Activated naive CD4-positive, alpha-beta T cell treated with anti-CD3 and anti-CD28 coated beads for 36 hours (primary cell): ENCODE measurements at regions of chr3 and their contacts with region 1.

Region 1: DNA sequence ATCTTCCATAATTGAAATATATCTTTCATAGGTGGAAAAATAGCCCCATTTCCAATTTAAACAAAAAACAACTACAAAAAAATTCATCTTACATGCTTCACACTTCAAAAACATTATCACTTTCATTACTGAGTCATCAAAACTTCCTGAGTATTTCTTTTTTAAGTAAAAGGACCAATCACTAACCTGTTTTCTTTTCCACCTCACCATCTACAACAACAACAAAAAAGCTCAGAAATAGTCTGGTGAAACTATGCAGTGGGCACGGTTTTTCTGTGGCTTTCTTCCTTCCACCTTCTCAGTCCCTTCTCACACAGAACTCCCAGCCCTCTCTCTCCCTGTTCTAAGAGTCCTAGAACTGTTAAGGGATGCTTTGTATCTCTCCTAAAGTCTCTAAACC is 20.3 kb upstream of the TNIK start:
- DNase-seq: peak; percentile 22
- H3K4me3 Mint-ChIP-seq: no peak overlapping the region
- H3K27ac Mint-ChIP-seq: peak overlapping the region; percentile 80
- H3K4me1 Mint-ChIP-seq: peaks cover 16% of the 10 kb centered on the region
- H3K27me3 Mint-ChIP-seq: no peaks in the 10 kb centered on the region

Region 2: DNA sequence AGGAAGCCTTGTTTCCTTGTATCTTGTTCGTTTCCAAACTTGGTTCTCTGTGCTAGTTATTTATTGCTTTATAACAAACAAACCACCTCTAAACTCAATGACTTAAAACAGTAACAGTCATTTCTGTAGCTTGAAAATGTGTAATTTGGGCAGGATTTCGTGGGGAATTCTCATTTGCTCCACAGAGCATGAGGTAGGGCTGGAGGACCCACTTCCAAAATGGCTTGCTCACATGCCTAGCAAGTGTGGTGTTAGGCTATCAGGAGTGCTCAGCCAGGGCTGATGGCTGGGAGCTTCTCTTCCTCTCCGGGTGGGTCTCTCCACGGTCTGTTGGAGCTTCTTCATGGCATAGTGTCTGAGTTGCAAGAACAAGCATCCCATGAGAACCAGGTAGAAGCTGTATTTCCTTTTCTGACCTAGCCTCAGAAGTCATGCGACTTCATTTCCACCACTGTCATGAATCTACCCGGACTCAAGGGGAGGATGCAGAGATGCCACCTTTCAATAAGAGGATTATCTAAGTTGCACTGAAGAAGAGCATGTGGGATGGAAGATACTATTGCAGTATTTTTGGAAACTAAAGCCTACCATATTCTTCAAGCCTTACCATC is 12.1 kb before region 1 on chr3:
- CTCF ChIA-PET with region 1: interaction called, 4 read pairs
- intact Hi-C with region 1: loop called (anchors 1 kb)
- DNase-seq: no peak
- H3K4me3 Mint-ChIP-seq: no peak overlapping the region
- H3K27ac Mint-ChIP-seq: no peak overlapping the region
- H3K4me1 Mint-ChIP-seq: peaks cover 2% of the 10 kb centered on the region
- H3K27me3 Mint-ChIP-seq: no peaks in the 10 kb centered on the region

Region 3: GRCh38 chr3:171491361-171491760 is 10.8 kb after region 1 on chr3:
- CTCF ChIA-PET with region 1: interaction called, 3 read pairs
- intact Hi-C with region 1: loop called (anchors 1 kb)
- DNase-seq: no peak
- H3K4me3 Mint-ChIP-seq: peak overlapping the region; percentile 51
- H3K27ac Mint-ChIP-seq: peak overlapping the region; percentile 62
- H3K4me1 Mint-ChIP-seq: peaks cover 34% of the 10 kb centered on the region
- H3K27me3 Mint-ChIP-seq: no peaks in the 10 kb centered on the region

Region 4: DNA sequence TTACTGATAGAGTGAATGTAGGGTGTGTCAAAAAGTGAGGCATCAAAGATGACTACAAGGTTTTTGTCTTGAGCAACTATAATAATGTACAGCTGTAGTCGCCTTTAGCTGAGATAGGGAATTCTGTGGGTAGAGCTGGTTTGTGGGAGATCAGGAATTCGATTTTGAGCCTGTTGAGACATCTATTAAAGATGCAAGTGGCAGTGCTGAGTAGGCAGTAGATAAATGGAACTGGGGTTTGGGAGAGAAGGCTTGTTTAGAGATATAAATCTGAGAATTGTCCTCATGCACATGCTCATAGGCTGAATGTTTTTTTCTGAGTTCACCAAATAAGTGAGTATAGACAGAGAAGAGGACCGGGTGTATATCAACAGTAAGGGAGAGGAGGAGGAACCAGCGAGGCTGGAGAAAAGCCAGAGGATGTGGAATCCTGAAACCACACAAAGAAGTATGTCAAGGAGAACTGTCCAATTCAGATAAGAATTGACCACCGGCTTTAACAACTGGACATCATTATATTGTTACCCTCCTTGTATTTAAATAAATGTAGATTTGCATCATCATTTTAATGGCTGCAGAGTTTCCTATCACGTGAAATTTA is 125.7 kb after region 1 on chr3:
- CTCF ChIA-PET with region 1: no interaction called
- intact Hi-C with region 1: no loop called
- DNase-seq: no peak
- H3K4me3 Mint-ChIP-seq: no peak overlapping the region
- H3K27ac Mint-ChIP-seq: no peak overlapping the region
- H3K4me1 Mint-ChIP-seq: no peaks in the 10 kb centered on the region
- H3K27me3 Mint-ChIP-seq: no peaks in the 10 kb centered on the region